Calu3 (cell line): ENCODE measurements at regions of chrX and their contacts with region 1.

Region 1: GRCh38 chrX:47560831-47561652 is at the start of gene ARAF:
- DNase-seq: peak; percentile 97
- H3K4me3 Mint-ChIP-seq: peak within 1 kb of the TSS; percentile 95
- H3K27ac Mint-ChIP-seq: peak within 1 kb of the TSS; percentile 99
- H3K4me1 Mint-ChIP-seq: peaks cover 21% of the 10 kb centered on the region
- H3K27me3 Mint-ChIP-seq: no peaks in the 10 kb centered on the region
- CTCF ChIP-seq: no peak
- total RNA-seq, gene ARAF: 79.2 and 84.4 TPM in 2 replicates

Region 2: GRCh38 chrX:46366381-46367207 is 1194.4 kb before region 1 on chrX:
- CTCF ChIA-PET with region 1: no interaction called
- intact Hi-C with region 1: no loop called
- DNase-seq: no peak
- H3K4me3 Mint-ChIP-seq: no peak overlapping the region
- H3K27ac Mint-ChIP-seq: no peak overlapping the region
- H3K4me1 Mint-ChIP-seq: peaks cover 12% of the 10 kb centered on the region
- H3K27me3 Mint-ChIP-seq: no peaks in the 10 kb centered on the region
- CTCF ChIP-seq: no peak

Region 3: DNA sequence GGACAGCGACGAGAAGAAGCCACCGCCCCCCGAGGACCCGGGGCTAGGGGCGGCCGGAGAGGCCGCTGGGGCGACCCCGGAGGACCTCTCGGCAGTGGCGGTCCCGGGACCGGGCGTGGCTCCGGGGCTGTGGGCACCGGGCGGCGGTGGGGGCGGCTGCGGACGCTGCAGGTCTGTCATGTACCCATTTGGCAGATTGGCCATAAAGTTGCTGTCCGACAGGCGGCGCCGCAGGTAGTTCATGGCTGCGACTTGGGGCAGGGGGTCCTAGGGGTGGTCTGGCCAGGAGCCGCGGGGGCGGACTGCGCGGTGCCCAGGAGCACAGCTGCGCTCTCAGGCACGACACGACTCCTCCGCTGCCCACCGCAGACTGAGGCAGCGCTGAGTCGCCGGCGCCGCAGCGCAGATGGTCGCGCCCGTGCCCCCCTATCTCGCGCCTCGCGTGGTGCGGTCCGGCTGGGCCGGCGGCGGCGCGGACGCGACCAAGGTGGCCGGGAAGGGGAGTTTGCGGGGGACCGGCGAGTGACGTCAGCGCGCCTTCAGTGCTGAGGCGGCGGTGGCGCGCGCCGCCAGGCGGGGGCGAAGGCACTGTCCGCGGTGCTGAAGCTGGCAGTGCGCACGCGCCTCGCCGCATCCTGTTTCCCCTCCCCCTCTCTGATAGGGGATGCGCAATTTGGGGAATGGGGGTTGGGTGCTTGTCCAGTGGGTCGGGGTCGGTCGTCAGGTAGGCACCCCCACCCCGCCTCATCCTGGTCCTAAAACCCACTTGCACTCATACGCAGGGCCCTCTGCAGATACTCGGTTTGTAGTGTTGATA is 58.7 kb after region 1 on chrX and contains the start of gene SYN1:
- CTCF ChIA-PET with region 1: no interaction called
- intact Hi-C with region 1: loop called (anchors 10 kb)
- DNase-seq: peak; percentile 77
- H3K4me3 Mint-ChIP-seq: peak within 1 kb of the TSS; percentile 26
- H3K27ac Mint-ChIP-seq: no peak within 1 kb of the TSS
- H3K4me1 Mint-ChIP-seq: peaks cover 8% of the 10 kb centered on the region
- H3K27me3 Mint-ChIP-seq: peaks cover 70% of the 10 kb centered on the region
- CTCF ChIP-seq: no peak
- total RNA-seq, gene SYN1: 0.21 TPM in 1 of 2 replicates, not detected in the other

Region 4: GRCh38 chrX:47650164-47651042 is 89.4 kb after region 1 on chrX and contains the start of gene ELK1:
- CTCF ChIA-PET with region 1: no interaction called
- intact Hi-C with region 1: loop called (anchors 10 kb)
- DNase-seq: peak; percentile 94
- H3K4me3 Mint-ChIP-seq: peak within 1 kb of the TSS; percentile 77
- H3K27ac Mint-ChIP-seq: peak within 1 kb of the TSS; percentile 83
- H3K4me1 Mint-ChIP-seq: peaks cover 33% of the 10 kb centered on the region
- H3K27me3 Mint-ChIP-seq: no peaks in the 10 kb centered on the region
- CTCF ChIP-seq: no peak
- total RNA-seq, gene ELK1: 42.4 and 43.9 TPM in 2 replicates

Region 5: GRCh38 chrX:47687263-47687662 is 126.2 kb after region 1 on chrX:
- CTCF ChIA-PET with region 1: no interaction called
- intact Hi-C with region 1: no loop called
- DNase-seq: no peak
- H3K4me3 Mint-ChIP-seq: no peak overlapping the region
- H3K27ac Mint-ChIP-seq: no peak overlapping the region
- H3K4me1 Mint-ChIP-seq: no peaks in the 10 kb centered on the region
- H3K27me3 Mint-ChIP-seq: peaks cover 61% of the 10 kb centered on the region
- CTCF ChIP-seq: no peak